ENCODE measurements at regions of chr3 and their contacts with region 1.

Region 1: GRCh38 chr3:58532794-58533220 is 4.2 kb downstream of the ACOX2 start:
- DNase-seq: peak; percentile 87
- ATAC-seq: peak; percentile 45

Region 2: DNA sequence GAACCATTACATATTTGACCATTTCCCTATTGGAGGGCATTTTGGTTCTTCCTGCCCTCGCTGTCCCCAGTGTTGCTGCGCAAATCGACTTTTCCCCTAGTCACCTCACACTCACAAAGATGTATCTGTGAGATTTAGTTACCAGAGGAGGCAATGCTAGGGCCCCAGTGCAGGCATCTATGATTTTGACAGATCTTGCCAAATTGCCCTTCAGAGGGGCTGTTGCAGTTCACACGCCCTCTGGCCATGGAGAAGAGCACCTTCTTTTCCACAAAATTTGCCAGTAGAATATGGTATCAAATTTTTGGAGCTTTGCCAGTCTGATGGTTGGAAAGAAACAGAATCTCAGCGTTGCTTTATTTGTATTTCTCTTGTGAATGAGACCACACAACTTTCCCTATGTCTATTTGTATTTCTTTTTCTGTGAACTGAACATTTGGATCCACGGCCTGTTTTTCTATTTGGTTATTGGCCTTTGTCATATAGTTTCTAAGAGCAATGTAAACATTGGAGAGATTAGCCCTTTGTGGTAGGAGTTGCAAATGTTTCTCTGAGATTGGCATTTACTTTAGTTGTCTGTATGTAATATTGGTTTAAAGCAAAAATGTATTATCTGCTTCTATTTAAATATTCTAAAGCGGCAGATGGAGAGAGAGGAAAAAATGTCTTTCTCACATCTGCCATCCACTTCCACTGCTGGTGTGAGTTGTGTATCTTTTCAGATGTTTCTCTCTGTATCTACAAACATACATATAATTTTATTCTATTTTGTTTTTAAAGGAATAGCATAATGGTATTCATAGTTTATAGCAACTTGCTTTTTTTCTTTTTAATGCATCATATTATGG is 388.1 kb before region 1 on chr3:
- intact Hi-C with region 1: no loop called
- DNase-seq: no peak
- ATAC-seq: no peak

Region 3: DNA sequence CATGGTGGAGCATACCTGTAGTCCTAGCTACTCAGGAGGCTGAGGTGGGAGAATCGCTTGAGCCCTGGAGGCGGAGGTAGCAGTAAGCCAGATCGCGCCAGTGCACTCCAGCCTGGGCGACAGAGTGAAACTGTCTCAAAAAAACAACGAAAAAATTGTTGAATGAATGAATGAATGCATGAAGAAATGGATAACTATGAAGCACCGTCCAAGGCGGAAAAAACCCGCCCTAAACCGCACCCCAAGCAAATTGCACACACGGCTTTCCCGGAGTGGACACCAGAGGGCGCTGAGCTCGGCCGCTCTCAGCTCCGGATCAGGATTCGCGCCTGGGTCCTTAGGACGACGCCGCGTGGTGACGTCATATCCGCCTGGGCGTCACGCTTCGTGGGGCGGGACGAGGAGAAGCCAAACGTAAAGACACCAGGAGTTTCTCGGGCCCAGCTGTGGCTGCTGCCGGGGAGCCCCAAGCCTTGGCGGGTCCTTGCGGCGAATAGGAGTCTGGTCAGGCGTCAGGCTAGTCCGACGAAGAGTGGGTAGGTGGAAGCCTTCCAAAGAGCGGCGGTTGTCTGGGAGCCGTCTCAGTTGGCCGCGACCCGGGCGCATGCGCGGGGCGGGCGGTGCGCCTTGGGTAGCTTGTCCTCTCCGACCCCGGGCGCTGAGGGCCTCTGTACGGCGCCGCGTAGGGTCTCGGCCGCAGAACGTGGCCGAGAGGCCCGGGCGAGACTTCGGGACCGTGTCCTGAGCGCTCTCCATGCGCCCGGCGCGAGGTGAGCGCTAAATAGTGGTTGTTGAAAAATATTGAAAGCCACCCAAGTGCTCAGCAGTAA is 226.7 kb before region 1 on chr3 and contains the starts of genes HTD2 and RPP14:
- intact Hi-C with region 1: loop called (anchors 5 kb)
- DNase-seq: peak; percentile 100
- ATAC-seq: peak; percentile 96
- total RNA-seq, gene HTD2: 14.7 TPM
- total RNA-seq, gene RPP14: 23.2 TPM

Region 4: DNA sequence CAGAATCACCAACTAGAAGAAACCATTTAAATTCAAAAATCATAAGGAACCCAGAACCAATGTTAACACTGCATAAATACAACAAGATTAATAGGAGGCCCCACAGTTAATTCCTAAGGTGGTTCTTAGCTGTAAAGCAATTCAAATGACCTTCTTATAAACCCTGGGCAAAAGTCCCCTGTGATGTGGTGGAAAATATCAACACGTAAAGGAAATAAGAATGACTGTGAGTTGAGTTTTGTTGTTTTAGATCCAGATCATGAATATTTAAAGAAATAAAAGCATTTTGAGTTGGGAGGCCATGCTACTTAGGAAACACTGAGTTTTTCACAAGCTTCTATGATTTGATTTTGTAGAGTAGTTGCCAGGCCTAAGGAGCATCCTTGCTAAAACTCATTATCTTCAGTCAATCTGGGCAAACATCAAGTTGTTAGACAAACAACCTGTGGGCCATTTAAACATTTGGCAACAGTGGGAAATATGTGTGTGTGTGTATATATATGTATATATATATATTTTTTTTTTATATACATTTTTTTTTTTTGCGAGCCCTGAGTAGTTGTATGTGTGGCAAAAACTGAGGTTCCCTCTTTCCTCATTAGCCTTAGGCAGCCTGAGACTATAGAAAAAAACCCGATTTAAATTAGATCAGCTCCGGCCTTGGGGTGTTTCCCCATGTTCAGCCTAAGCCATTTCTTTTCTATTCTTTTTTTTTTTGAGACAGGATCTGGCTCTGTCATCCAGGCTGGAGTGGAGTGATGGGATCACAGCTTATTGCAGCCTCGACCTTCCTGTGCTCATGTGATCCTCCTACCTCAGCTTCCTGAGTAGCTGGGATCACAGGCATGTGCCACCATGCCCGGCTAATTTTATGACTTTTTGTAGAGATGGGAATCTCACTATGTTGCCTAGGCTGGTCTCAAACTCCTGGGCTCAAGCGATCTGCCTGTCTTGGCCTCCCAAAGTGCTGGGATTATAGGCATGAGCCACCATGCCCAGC is 208.1 kb before region 1 on chr3:
- intact Hi-C with region 1: loop called (anchors 5 kb)
- DNase-seq: no peak
- ATAC-seq: no peak

Region 5: DNA sequence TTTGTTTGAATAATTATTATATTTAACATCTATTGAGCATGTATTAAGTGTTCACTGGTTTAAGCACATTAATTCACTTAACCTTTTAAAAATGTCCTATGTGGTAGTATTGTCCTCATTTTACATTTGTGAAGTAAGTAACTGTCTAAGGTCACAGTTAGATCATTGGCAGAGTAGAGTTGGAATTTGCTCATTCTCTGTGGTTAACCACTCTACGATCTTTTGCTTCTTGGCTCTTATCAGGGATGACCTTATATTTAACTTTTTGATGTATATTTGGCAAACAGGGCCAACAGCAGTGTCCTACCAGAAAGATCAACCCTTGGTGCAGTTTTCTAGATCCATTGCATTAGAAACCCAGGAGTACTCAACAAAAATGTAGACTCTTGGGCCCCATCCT is 166.1 kb before region 1 on chr3:
- intact Hi-C with region 1: no loop called
- DNase-seq: no peak
- ATAC-seq: no peak

Region 6: DNA sequence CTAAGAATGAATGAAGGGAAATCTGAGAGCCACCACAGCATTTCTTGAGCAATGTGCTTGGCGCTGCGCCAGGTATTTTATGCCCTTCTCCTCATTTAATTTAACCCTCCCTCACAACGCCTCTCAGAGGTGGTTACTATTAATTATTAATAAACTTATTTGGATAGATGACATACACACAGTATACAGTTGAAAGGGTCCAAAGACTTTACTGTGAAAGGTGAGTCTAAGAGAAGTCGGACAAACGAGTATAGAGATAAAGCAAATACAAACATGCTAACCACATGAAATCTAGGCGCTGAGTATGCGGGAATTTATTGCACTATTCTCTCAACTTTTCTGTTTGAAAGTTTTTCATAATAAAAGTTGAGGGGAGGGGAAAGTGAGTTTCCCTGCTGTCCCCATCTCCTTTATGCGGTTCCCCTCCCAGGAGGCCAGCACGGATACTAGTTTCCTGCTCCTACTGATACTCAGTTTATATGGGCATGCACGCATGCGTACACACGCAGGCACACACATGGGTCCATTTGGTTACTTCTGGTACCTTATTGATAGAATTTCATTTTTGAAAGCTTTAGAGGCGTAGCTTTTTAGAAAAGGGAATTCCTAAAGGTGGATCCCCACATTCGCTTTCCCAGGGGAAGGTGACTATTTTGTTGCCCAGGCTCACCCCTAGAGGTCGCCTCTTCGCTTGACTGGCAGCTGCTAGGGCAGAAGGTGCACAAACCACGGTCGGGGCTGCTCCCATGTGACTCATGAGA is 69.4 kb before region 1 on chr3:
- intact Hi-C with region 1: loop called (anchors 2 kb)
- DNase-seq: peak; percentile 79
- ATAC-seq: peak; percentile 90

Region 7: DNA sequence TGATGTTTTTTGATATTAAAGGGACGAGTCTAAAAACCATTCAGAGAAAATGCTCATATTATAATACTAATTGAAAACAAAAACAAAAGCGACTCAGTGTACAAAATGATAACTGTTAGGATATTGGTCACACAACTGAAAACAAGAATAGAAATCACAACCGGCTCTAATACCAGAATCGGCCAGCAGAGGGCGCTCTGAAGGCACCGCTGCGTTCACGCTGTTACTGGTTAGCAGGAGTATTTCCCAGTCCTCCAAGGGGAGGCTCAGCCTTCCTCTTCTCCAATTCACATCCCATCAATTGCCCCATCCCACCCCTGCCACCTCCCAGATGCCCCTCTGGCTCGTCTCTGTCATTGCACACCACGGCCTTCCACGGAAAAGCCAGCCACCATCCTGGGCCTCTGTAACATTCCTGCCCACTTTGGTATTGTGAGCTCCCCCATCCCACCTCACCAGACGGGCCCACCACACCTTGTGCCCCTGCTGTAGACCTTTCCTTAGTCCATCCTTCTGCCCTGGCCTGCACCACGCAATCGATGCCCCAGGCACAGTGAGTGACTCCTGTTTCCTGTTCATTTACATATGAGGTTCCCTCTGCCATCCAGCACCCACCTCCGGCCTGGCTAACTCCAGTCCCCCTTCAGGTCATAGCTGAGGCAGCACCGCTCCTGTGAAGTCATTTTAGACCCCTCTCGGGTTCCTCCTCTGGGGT is 35.9 kb after region 1 on chr3:
- intact Hi-C with region 1: no loop called
- DNase-seq: peak; percentile 86
- ATAC-seq: peak; percentile 40

Measured in Right ventricle myocardium inferior (tissue), 1 donor.